ENCODE measurements at regions of chrX and their contacts with region 1.

Region 1: GRCh38 chrX:12974796-12975669 is at the start of gene TMSB4X:
- DNase-seq: peak; percentile 64 to 91 (median 80)
- ATAC-seq: peak; percentile 45 to 48
- H3K4me3 Mint-ChIP-seq: peak within 1 kb of the TSS; percentile 95 to 99 (median 97)
- H3K27ac Mint-ChIP-seq: peak within 1 kb of the TSS; percentile 93 to 98 (median 97)
- H3K4me1 Mint-ChIP-seq: peaks cover 10 to 51% (median 29%) of the 10 kb centered on the region in 4 donors
- H3K27me3 Mint-ChIP-seq: no peaks in the 10 kb centered on the region
- polyA plus RNA-seq, gene TMSB4X: 23,903 to 30,039 (median 28,786) TPM

Region 2: DNA sequence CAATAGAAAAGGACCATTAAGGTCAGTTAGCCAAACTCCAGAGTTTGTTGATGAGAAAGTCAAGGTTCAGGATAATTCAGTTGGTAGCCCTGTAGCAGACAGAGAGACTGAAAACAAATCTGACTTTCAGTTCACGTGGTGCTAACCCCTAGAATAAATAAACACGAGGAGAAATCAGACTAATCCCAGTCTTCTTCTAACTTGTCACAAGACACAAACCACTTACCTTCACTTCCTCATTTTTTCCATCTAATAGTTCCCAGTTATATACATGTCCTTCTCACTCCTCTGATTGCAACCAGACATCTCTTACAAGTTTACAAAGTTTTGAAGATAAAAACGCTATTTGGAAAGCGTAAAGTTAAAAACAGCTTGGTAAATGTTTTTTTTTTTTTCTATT is 100.5 kb before region 1 on chrX:
- POLR2A ChIA-PET with region 1: no interaction called
- DNase-seq: no peak
- ATAC-seq: no peak
- H3K4me3 Mint-ChIP-seq: no peak overlapping the region
- H3K27ac Mint-ChIP-seq: peak overlapping the region in 1 of 10 donors; percentile 38
- H3K4me1 Mint-ChIP-seq: peaks cover 0 to 21% (median under 1%) of the 10 kb centered on the region in 4 donors
- H3K27me3 Mint-ChIP-seq: peaks cover 0 to 1% (median 0%) of the 10 kb centered on the region in 5 donors

Region 3: GRCh38 chrX:12929701-12930100 is 45.3 kb before region 1 on chrX:
- POLR2A ChIA-PET with region 1: no interaction called
- DNase-seq: no peak
- ATAC-seq: no peak
- H3K4me3 Mint-ChIP-seq: no peak overlapping the region
- H3K27ac Mint-ChIP-seq: no peak overlapping the region
- H3K4me1 Mint-ChIP-seq: no peaks in the 10 kb centered on the region
- H3K27me3 Mint-ChIP-seq: peaks cover 0 to 2% (median 0%) of the 10 kb centered on the region in 5 donors

Region 4: DNA sequence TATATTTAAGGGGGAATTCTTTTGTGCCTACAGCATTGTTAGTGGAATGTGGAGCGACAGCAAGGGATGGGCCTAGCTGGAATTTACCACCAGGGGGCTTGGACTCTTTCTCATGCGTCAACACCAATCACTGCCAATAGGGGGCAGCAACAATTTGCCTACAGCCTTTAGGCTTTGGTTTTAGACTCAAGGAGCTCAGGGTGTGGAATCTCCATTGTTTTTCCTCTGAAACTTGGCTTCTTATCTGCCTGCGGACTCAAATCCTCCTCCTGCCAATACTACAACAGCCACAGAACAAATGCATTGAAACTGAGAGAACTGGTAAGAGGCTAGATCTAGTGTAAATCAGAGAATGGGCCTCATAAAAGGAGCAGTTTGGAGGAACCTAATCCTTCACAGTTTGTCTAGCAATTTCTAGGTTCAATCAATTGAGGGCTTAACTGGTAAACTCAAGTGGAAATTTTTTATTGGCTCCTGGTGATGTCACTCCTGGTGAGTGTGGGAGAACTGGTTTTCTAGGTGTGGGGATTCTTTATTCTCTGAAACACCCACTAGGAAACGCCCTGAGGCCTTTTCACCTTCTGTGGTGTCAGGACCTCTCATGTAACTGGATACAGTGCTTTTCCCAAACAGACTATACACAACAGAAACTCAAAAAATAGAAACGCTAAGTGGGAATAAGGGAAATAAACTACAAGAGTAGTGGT is 28.0 kb before region 1 on chrX:
- POLR2A ChIA-PET with region 1: interaction called, 1,336 read pairs
- DNase-seq: peak; percentile 38 to 95 (median 73)
- ATAC-seq: peak in 1 of 2 donors; percentile 11
- H3K4me3 Mint-ChIP-seq: peak overlapping the region; percentile 19 to 82 (median 68)
- H3K27ac Mint-ChIP-seq: peak overlapping the region; percentile 37 to 99 (median 96)
- H3K4me1 Mint-ChIP-seq: peaks cover 10 to 57% (median 50%) of the 10 kb centered on the region in 4 donors
- H3K27me3 Mint-ChIP-seq: no peaks in the 10 kb centered on the region

Region 5: DNA sequence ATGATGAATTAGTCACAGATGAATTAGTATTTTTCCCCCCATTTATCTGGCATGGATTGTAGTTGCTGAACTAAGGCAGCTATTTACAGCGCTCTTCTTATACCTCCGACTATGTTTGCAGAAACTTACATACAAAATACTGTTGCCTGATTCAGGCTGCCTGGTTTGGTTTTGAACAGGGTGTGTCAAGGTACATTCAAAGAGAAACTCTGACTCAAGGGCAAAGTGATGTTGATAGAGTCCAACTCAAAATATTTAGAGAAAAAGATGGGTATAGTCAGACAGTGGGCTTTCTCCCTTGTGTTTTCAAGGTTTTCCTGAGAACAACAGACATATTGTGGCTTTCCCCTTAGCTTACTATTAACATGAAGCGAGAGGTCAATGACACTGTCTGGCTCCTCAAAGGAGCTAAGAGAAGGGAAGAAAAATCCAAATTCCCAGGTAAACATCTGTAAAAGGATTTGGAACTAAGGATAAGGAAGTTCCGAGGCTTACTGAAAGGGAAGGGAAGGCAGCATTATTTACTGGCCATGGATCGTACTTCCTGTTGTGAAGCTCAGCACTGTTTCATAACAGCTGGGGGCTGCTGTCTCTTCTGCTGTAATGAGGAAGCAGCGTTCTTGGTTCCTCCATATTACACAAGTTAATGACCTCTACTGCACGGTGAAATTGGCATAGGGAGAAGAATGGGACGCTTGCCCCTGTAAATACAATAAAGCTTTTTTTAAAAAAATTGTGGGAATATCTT is 38.5 kb after region 1 on chrX:
- POLR2A ChIA-PET with region 1: interaction called, 329 read pairs
- DNase-seq: peak in 2 of 10 donors; percentile 26 to 34
- ATAC-seq: peak; percentile 82 to 84
- H3K4me3 Mint-ChIP-seq: peak overlapping the region; percentile 1 to 71 (median 56)
- H3K27ac Mint-ChIP-seq: peak overlapping the region; percentile 35 to 99 (median 89)
- H3K4me1 Mint-ChIP-seq: peaks cover 10 to 70% (median 60%) of the 10 kb centered on the region in 4 donors
- H3K27me3 Mint-ChIP-seq: no peaks in the 10 kb centered on the region

Region 6: DNA sequence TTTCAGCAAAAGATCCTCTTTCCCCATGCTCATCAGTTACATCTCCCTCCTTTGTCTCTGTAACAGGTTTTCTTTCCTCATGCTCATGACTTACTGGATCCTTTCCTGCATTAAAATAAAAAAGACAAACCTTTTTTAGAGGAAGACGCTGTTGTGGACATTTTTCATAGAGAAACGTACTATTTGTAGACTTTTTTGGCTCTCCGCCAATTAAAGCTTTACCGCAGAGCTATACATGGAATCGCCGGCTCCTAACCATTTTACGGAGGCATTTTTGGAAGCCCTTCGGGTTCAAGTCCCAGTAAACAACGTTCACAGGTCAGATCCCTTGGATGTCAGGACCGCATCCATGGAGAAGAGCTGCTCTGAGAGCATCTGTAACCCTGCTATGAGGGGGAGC is 68.1 kb after region 1 on chrX:
- POLR2A ChIA-PET with region 1: interaction called, 179 read pairs
- DNase-seq: no peak
- ATAC-seq: no peak
- H3K4me3 Mint-ChIP-seq: no peak overlapping the region
- H3K27ac Mint-ChIP-seq: peak overlapping the region in 6 of 10 donors; percentile 7 to 93 (median 56)
- H3K4me1 Mint-ChIP-seq: peaks cover 5 to 47% (median 44%) of the 10 kb centered on the region in 4 donors
- H3K27me3 Mint-ChIP-seq: no peaks in the 10 kb centered on the region

Region 7: GRCh38 chrX:13487731-13488523 is 512.9 kb after region 1 on chrX:
- POLR2A ChIA-PET with region 1: interaction called, 16 read pairs
- DNase-seq: peak in 9 of 10 donors; percentile 1 to 67 (median 42)
- ATAC-seq: peak; percentile 75 to 88
- H3K4me3 Mint-ChIP-seq: peak overlapping the region in 4 of 10 donors; percentile 6 to 33 (median 28)
- H3K27ac Mint-ChIP-seq: peak overlapping the region; percentile 34 to 91 (median 78)
- H3K4me1 Mint-ChIP-seq: peaks cover 4 to 49% (median 33%) of the 10 kb centered on the region in 4 donors
- H3K27me3 Mint-ChIP-seq: no peaks in the 10 kb centered on the region

Measured in naive thymus-derived CD8-positive, alpha-beta T cell (primary cell).